SK-N-SH (cell line): ENCODE measurements at regions of chr2 and their contacts with region 1.

Region 1: DNA sequence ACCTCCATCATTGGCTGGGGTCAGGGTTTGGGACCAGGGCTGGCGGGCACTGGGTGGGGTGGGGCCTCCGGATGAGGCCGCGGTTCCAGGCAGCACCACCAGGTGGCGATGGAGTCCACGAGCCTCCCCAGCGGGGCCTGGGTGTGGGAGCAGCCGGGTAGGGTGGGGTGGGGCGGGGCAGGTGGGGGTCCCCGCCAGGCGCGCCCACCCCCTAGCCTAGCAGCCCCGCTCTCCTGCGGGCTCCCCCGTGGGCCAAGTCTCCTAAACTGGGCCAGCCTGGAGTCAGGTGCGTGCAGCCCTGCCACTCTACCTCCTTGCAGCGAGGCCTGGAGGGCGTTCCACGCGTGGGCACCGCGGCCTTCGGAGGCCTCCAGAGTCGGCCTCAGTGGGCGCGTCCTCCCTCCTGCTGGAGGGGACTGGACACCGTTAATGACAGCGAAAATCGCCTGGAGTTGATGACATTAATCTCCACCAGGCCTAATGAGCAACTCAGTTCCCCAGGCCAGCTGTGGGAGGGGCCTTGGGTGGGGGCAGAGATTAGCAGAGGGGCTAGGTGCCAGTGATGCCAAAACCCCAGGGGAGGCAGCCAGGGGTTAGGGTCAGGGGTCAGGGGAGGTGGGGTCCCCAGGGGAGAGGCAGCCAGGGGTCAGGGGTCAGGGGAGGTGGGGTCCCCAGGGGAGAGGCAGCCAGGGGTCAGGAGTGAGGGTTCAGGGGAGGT is 187.6 kb downstream of the TWIST2 start:
- DNase-seq: peak; percentile 98
- H3K4me3 ChIP-seq: no peak overlapping the region
- H3K27ac ChIP-seq: no peak overlapping the region; a peak in 1 of 4 replicates
- H3K4me1 ChIP-seq: peaks cover 0 to 14% of the 10 kb centered on the region in 2 experiments; a peak in 1 of 4 replicates
- H3K27me3 ChIP-seq: no peaks in the 10 kb centered on the region
- CTCF ChIP-seq: peak; percentile 60
- EP300 ChIP-seq: no peak
- RAD21 ChIP-seq: peak; percentile 70

Region 2: GRCh38 chr2:238954841-238955591 is 80.5 kb before region 1 on chr2:
- CTCF ChIA-PET with region 1: no interaction called
- POLR2A ChIA-PET with region 1: no interaction called
- DNase-seq: no peak
- H3K4me3 ChIP-seq: no peak overlapping the region
- H3K27ac ChIP-seq: no peak overlapping the region
- H3K4me1 ChIP-seq: no peaks in the 10 kb centered on the region
- H3K27me3 ChIP-seq: no peaks in the 10 kb centered on the region
- CTCF ChIP-seq: no peak
- EP300 ChIP-seq: no peak
- RAD21 ChIP-seq: no peak

Region 3: DNA sequence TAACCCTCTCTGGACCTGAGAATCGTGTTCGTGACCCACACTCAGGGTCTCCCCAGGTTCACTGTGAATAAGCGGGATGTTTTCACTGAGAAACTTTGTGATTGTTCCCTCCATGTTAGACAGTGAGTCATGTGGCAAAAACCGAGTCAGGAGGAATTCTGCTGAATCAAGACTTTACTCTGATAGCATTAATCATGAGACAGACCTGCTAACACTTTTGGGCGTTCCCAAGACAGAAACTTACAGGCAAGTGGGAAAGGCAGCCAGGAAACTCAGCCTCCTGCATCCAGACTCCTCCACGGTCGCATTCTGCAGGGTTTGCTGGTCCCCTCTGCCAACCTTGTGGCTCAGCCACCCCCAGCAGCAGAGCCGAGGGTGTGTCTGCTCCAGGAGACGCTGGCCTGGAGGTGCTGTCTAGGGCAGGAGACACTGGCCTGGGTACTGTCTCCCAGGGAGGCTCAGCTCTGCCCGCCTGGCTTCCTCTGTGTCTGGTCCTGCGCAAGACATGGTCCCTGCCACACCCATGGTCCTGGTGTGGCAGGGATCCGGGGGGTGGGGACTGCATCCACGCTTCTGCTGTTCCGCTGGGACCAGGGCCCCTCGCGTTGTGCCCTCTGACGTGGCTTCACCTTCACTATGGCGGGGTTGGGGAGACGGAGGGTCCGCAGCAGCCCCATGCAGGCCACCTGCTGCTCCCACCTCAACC is 10.3 kb before region 1 on chr2:
- CTCF ChIA-PET with region 1: interaction called, 18 read pairs
- POLR2A ChIA-PET with region 1: no interaction called
- DNase-seq: peak; percentile 50
- H3K4me3 ChIP-seq: no peak overlapping the region
- H3K27ac ChIP-seq: no peak overlapping the region; a peak in 1 of 4 replicates
- H3K4me1 ChIP-seq: peaks cover 0 to 33% of the 10 kb centered on the region in 2 experiments; a peak in 3 of 4 replicates
- H3K27me3 ChIP-seq: no peaks in the 10 kb centered on the region
- CTCF ChIP-seq: no peak
- EP300 ChIP-seq: no peak
- RAD21 ChIP-seq: no peak

Region 4: GRCh38 chr2:239098288-239098970 is 62.9 kb after region 1 on chr2:
- CTCF ChIA-PET with region 1: interaction called, 13 read pairs
- POLR2A ChIA-PET with region 1: interaction called, 3 read pairs
- DNase-seq: no peak
- H3K4me3 ChIP-seq: no peak overlapping the region
- H3K27ac ChIP-seq: peak overlapping the region in 1 of 2 experiments; percentile 83; a peak in 1 of 4 replicates
- H3K4me1 ChIP-seq: peaks cover 0 to 47% of the 10 kb centered on the region in 2 experiments; a peak in 1 of 4 replicates
- H3K27me3 ChIP-seq: no peaks in the 10 kb centered on the region
- CTCF ChIP-seq: no peak
- EP300 ChIP-seq: no peak
- RAD21 ChIP-seq: no peak